Activated CD4-positive, alpha-beta memory T cell treated with anti-CD3 and anti-CD28 coated beads for 36 hours (primary cell): ENCODE measurements at regions of chr9 and their contacts with region 1.

Region 1: DNA sequence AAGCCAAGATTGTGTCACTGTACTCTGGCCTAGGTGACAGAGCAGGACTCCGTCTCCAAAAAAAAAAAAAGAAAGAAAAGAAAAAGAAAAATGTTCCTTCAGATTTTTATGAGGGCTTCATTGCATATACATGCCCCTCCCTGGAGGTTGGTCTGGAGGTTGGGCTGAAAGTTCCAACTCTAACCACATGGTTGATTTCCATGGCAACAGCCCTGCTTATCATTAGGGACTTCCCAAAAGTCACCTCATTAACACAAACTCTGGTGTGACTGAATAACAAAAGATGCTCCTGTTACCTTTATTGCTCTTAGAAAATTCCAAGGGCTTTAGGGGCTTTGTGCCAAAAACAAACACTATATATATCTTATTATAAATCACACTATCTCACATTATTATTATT is 113.8 kb downstream of the TMC1 start:
- DNase-seq: peak; percentile 48
- H3K4me3 Mint-ChIP-seq: no peak overlapping the region
- H3K27ac Mint-ChIP-seq: no peak overlapping the region
- H3K4me1 Mint-ChIP-seq: peaks cover 14% of the 10 kb centered on the region
- H3K27me3 Mint-ChIP-seq: peaks cover 5% of the 10 kb centered on the region

Region 2: DNA sequence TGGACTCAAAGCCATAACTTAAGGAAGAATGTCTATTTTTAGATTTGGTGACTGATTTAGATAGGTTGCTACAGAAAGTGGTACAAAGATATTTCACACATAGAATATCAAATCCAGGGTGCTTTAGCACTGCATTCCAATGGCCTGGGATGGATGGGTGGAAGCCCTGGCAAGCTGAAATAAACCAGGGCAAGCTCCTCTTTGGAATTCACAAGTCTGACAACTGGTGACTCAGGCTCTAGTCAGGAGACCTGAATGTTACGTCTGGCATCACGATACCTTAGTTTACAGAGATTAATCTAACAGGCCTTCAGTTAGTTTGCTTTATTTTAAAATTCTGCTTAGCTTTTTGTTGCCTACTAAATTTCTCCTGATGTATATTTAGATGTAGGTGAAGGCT is 30.2 kb after region 1 on chr9:
- CTCF ChIA-PET with region 1: no interaction called
- POLR2A ChIA-PET with region 1: no interaction called
- intact Hi-C with region 1: loop called (anchors 1 kb)
- DNase-seq: no peak
- H3K4me3 Mint-ChIP-seq: no peak overlapping the region
- H3K27ac Mint-ChIP-seq: no peak overlapping the region
- H3K4me1 Mint-ChIP-seq: no peaks in the 10 kb centered on the region
- H3K27me3 Mint-ChIP-seq: peaks cover 10% of the 10 kb centered on the region

Region 3: DNA sequence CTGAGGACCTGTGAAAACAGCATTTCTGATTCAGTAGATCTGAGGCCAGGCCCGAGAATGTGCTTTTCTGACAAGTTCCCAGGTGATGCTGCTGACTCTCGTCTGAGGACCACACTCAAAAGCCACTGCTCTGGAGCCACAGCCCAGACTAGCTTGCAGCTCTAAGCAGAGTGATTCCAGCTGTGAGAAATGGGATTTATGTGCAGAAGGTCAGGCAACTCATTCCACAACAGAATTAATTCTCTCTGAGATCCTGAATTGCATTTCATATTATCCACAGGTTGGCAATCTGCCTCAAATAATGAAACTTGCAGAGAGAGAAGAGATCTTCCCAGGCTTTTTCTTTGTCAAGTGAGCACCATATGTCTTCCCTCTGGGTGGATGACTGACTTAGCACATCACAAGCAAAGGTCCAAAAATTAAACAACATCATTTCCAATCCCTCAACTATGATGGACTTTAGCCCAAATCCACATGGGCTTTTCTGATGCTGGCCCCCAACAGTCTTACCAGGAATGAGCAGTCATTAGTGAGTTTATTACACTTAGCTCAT is 177.4 kb after region 1 on chr9:
- CTCF ChIA-PET with region 1: no interaction called
- POLR2A ChIA-PET with region 1: no interaction called
- intact Hi-C with region 1: loop called (anchors 10 kb)
- DNase-seq: no peak
- H3K4me3 Mint-ChIP-seq: no peak overlapping the region
- H3K27ac Mint-ChIP-seq: no peak overlapping the region
- H3K4me1 Mint-ChIP-seq: no peaks in the 10 kb centered on the region
- H3K27me3 Mint-ChIP-seq: peaks cover 2% of the 10 kb centered on the region